Lower leg skin (tissue), 4 donors: ENCODE measurements at regions of chr15 and their contacts with region 1.

Region 1: DNA sequence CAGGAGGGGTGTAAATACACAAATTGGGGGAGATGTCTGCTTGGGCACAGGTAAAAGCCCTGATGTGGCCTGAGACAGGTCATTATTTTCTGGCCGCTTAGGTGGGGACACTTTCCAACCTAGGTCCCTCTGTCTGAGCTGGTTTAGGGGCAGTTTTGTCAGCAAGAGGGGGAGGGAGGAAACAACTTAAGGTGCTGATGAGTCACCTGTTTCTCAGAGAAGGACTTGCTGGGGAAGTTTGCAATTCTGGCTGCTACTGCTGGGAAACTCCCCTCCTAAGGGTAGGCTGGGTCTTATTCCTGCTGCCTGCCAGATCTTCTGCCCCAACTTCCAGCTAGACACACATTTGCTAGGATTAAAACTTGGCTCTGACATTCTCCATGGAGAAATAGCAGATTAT is 4.8 kb upstream of the RHOV start:
- DNase-seq: no peak
- H3K4me3 ChIP-seq: no peak overlapping the region
- CTCF ChIP-seq: no peak
- POLR2A ChIP-seq: no peak

Region 2: GRCh38 chr15:39919748-39920509 is 958.9 kb before region 1 on chr15 and contains the start of gene GPR176:
- intact Hi-C with region 1: loop called (anchors 5 kb)
- DNase-seq: peak; percentile 48 to 93
- H3K4me3 ChIP-seq: peak within 1 kb of the TSS; percentile 66
- CTCF ChIP-seq: no peak
- POLR2A ChIP-seq: no peak
- total RNA-seq, gene GPR176: 0.53 to 6.2 (median 3.0) TPM